ENCODE measurements at regions of chr20 and their contacts with region 1.

Region 1: GRCh38 chr20:45890985-45891983 is at the starts of genes CTSA and NEURL2:
- DNase-seq: peak; percentile 95 to 97 (median 96)
- H3K4me3 ChIP-seq: peak within 1 kb of the TSS; percentile 53
- H3K27ac ChIP-seq: peak within 1 kb of the TSS; percentile 72 to 97
- H3K4me1 ChIP-seq: peaks cover 9% of the 10 kb centered on the region
- H3K27me3 ChIP-seq: no peaks in the 10 kb centered on the region
- CTCF ChIP-seq: peak in 1 of 3 donors; percentile 21
- EP300 ChIP-seq: peak; percentile 81
- POLR2A ChIP-seq: peak; percentile 73
- total RNA-seq, gene CTSA: 45.0 to 156 (median 110) TPM
- total RNA-seq, gene NEURL2: 10.1 to 28.7 (median 12.5) TPM

Region 2: DNA sequence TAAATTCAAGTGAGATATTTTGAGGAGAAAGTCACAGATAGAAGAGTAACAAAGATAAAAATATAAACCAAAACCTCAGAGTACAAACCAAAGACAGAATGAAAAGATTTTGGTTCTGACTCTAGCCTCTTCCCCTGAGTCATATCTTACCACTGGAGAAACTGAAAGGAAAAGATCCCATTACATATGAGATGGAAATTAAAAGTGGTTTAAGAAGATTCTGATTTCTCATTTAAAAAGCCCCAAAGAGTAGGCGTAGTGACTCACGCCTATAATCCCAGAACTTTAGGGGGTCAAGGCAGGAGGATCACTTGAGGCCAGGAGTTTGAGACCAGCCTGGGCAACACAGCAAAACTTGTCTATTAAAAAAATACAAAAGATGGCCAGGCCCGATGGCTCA is 138.5 kb before region 1 on chr20:
- intact Hi-C with region 1: no loop called
- DNase-seq: no peak
- H3K4me3 ChIP-seq: no peak overlapping the region
- H3K27ac ChIP-seq: no peak overlapping the region
- H3K4me1 ChIP-seq: no peaks in the 10 kb centered on the region
- H3K27me3 ChIP-seq: no peaks in the 10 kb centered on the region
- CTCF ChIP-seq: no peak
- EP300 ChIP-seq: no peak
- POLR2A ChIP-seq: no peak

Region 3: DNA sequence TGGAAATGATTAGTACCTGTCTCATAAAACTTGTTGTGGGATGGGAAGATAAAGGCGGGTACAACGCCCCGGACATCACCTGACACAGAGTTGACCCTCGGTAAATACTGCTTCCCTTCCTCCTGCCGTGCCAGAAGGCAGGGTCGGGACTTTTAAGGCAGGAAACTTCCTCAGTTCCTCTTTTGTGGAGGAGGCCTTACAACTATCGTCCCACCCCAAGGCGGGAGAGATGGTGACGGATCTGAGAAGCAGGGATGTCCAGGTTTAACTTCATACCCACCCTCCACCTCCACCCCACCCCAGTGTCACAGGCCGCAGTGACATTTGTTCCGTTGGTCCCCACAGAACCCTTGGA is 99.0 kb before region 1 on chr20:
- intact Hi-C with region 1: loop called in 1 of 4 experiments (anchors 5 kb)
- DNase-seq: no peak
- H3K4me3 ChIP-seq: peak overlapping the region; percentile 97
- H3K27ac ChIP-seq: peak overlapping the region; percentile 74 to 84
- H3K4me1 ChIP-seq: peaks cover 7% of the 10 kb centered on the region
- H3K27me3 ChIP-seq: no peaks in the 10 kb centered on the region
- CTCF ChIP-seq: no peak
- EP300 ChIP-seq: no peak
- POLR2A ChIP-seq: no peak

Region 4: DNA sequence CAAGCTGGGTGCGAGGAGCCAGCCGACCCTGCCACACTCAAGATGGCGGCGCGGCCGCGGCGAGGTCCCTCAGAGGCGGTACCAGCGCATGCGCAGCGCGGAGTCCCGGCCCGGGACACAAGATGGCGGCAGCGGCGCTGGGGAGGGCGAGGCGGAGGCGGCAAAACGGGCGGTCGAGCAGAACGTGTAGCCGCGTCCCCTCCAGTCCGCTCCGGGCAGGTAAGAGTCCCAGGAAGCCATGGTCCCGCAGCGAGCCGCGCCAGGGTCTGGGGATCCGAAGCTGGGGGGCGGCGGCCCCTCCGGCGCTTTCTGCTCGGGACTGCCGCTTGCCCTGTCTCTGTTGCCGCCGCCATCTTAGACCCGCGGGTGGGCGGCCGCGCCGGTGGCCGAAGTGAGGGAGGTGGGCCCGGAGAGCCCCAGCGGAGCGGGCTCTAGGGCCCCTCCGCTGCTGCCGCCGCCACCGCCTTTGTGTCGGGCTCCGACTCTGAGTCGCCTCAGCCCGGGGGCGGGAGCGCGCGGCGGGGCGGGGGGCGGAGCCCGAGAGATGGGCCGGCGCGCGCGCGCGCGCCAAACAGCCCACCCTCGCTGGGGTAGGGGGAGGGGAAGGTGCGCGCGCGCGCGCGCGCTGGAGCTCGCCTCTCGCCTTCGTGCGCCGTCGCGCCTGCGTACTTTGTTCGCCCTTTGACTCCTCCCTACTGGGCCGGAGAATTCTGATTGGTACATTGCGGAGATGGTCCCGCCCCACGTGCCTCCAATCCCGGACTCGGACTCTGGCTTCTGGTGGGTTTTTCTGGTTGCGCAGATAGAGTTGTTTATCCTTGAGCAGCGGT is 43.5 kb after region 1 on chr20 and contains the start of gene PCIF1:
- intact Hi-C with region 1: loop called in 2 of 4 experiments (anchors 2 to 5 kb)
- DNase-seq: peak; percentile 99 to 100 (median 99)
- H3K4me3 ChIP-seq: peak within 1 kb of the TSS; percentile 67
- H3K27ac ChIP-seq: peak within 1 kb of the TSS; percentile 99 to 100
- H3K4me1 ChIP-seq: peaks cover 2% of the 10 kb centered on the region
- H3K27me3 ChIP-seq: no peaks in the 10 kb centered on the region
- CTCF ChIP-seq: peak in 2 of 3 donors; percentile 50 to 55
- EP300 ChIP-seq: no peak
- POLR2A ChIP-seq: peak; percentile 97
- total RNA-seq, gene PCIF1: 34.5 to 73.7 (median 59.8) TPM

Region 5: GRCh38 chr20:45963059-45964005 is 72.0 kb after region 1 on chr20:
- intact Hi-C with region 1: loop called in 3 of 4 experiments (anchors 5 to 10 kb)
- DNase-seq: peak in 3 of 5 donors; percentile 28 to 42 (median 30)
- H3K4me3 ChIP-seq: no peak overlapping the region
- H3K27ac ChIP-seq: no peak overlapping the region
- H3K4me1 ChIP-seq: no peaks in the 10 kb centered on the region
- H3K27me3 ChIP-seq: no peaks in the 10 kb centered on the region
- CTCF ChIP-seq: peak in 2 of 3 donors; percentile 13 to 33
- EP300 ChIP-seq: no peak
- POLR2A ChIP-seq: no peak

Region 6: GRCh38 chr20:46089417-46090388 is 198.4 kb after region 1 on chr20 and contains the start of gene NCOA5:
- intact Hi-C with region 1: loop called in 1 of 4 experiments (anchors 5 kb)
- DNase-seq: peak; percentile 95 to 98 (median 96)
- H3K4me3 ChIP-seq: peak within 1 kb of the TSS; percentile 94
- H3K27ac ChIP-seq: peak within 1 kb of the TSS; percentile 89 to 99
- H3K4me1 ChIP-seq: peaks cover 11% of the 10 kb centered on the region
- H3K27me3 ChIP-seq: no peaks in the 10 kb centered on the region
- CTCF ChIP-seq: peak in 2 of 3 donors; percentile 60 to 72
- EP300 ChIP-seq: no peak
- POLR2A ChIP-seq: peak; percentile 98
- total RNA-seq, gene NCOA5: 27.6 to 51.1 (median 37.4) TPM

Measured in ovary (tissue), 10 donors.